B cell (primary cell): ENCODE measurements at regions of chr18 and their contacts with region 1.

Region 1: GRCh38 chr18:12744103-12744502 is 41.3 kb downstream of the PSMG2 start:
- DNase-seq: peak; percentile 59
- ATAC-seq: peak; percentile 57
- H3K4me3 ChIP-seq: no peak overlapping the region
- H3K4me3 Mint-ChIP-seq: no peak overlapping the region
- H3K27ac ChIP-seq: no peak overlapping the region
- H3K27ac Mint-ChIP-seq: no peak overlapping the region
- H3K4me1 ChIP-seq: peaks cover 0 to 2% of the 10 kb centered on the region in 2 donors
- H3K4me1 Mint-ChIP-seq: peaks cover 2% of the 10 kb centered on the region
- H3K27me3 ChIP-seq: peaks cover 0 to 5% (median 0%) of the 10 kb centered on the region in 4 experiments
- H3K27me3 Mint-ChIP-seq: peaks cover 8% of the 10 kb centered on the region
- CTCF ChIP-seq: peak; percentile 75

Region 2: GRCh38 chr18:12726774-12727550 is 17.1 kb before region 1 on chr18:
- CTCF ChIA-PET with region 1: interaction called, 9 read pairs
- POLR2A ChIA-PET with region 1: no interaction called
- intact Hi-C with region 1: loop called (anchors 2 kb)
- DNase-seq: peak; percentile 77
- ATAC-seq: peak; percentile 61
- H3K4me3 ChIP-seq: no peak overlapping the region
- H3K4me3 Mint-ChIP-seq: no peak overlapping the region
- H3K27ac ChIP-seq: no peak overlapping the region
- H3K27ac Mint-ChIP-seq: no peak overlapping the region
- H3K4me1 ChIP-seq: no peaks in the 10 kb centered on the region
- H3K4me1 Mint-ChIP-seq: no peaks in the 10 kb centered on the region
- H3K27me3 ChIP-seq: no peaks in the 10 kb centered on the region
- H3K27me3 Mint-ChIP-seq: no peaks in the 10 kb centered on the region
- CTCF ChIP-seq: peak; percentile 93

Region 3: GRCh38 chr18:13318731-13319501 is 574.8 kb after region 1 on chr18:
- CTCF ChIA-PET with region 1: no interaction called
- POLR2A ChIA-PET with region 1: no interaction called
- intact Hi-C with region 1: no loop called
- DNase-seq: no peak
- ATAC-seq: no peak
- H3K4me3 ChIP-seq: no peak overlapping the region
- H3K4me3 Mint-ChIP-seq: no peak overlapping the region
- H3K27ac ChIP-seq: no peak overlapping the region
- H3K27ac Mint-ChIP-seq: no peak overlapping the region
- H3K4me1 ChIP-seq: no peaks in the 10 kb centered on the region
- H3K4me1 Mint-ChIP-seq: no peaks in the 10 kb centered on the region
- H3K27me3 ChIP-seq: no peaks in the 10 kb centered on the region
- H3K27me3 Mint-ChIP-seq: no peaks in the 10 kb centered on the region
- CTCF ChIP-seq: no peak